ENCODE measurements at regions of chr3 and their contacts with region 1.

Region 1: DNA sequence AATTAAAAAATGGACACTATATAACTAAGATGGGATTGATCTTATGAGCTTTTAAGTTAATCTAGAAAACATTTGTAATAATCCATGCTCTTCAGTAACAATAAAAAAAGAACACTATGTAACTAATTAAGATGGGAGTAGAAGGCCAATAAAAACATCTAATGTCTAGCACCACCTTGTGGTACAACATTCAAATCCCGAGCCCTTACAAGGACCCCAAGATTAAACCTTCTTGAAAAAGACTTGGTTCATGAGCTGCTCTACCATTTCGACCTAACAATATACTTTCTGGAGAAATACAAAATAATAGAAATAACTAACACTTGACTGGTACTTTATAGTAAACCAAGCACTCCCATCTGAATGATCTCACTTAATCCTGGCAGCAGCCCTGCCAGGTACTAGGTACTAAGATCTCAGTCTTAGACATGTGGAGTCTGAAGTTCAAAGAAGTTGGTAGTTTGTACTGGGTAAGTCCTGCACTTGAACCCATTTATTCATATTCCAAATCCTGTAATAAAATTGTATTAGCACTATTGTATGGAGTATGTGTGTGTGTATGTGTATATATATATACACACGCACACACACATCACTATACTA is 21.8 kb downstream of the METTL6 start:
- DNase-seq: peak in 2 of 5 donors; percentile 45 to 47
- H3K4me3 ChIP-seq: no peak overlapping the region
- H3K4me3 Mint-ChIP-seq: no peak overlapping the region
- H3K27ac ChIP-seq: no peak overlapping the region
- H3K27ac Mint-ChIP-seq: peak overlapping the region in 3 of 8 donors; percentile 11 to 61 (median 29)
- H3K4me1 ChIP-seq: no peaks in the 10 kb centered on the region
- H3K4me1 Mint-ChIP-seq: peaks cover 7 to 18% (median 9%) of the 10 kb centered on the region in 3 donors
- H3K27me3 ChIP-seq: no peaks in the 10 kb centered on the region
- H3K27me3 Mint-ChIP-seq: no peaks in the 10 kb centered on the region

Region 2: GRCh38 chr3:15199493-15200105 is 205.9 kb before region 1 on chr3:
- CTCF ChIA-PET with region 1: interaction called, 52 read pairs
- POLR2A ChIA-PET with region 1: interaction called, 3 read pairs
- DNase-seq: no peak
- H3K4me3 ChIP-seq: no peak overlapping the region
- H3K4me3 Mint-ChIP-seq: no peak overlapping the region
- H3K27ac ChIP-seq: no peak overlapping the region
- H3K27ac Mint-ChIP-seq: no peak overlapping the region
- H3K4me1 ChIP-seq: no peaks in the 10 kb centered on the region
- H3K4me1 Mint-ChIP-seq: peaks cover 2 to 10% (median 7%) of the 10 kb centered on the region in 3 donors
- H3K27me3 ChIP-seq: no peaks in the 10 kb centered on the region
- H3K27me3 Mint-ChIP-seq: peaks cover 0 to 2% of the 10 kb centered on the region in 2 donors

Region 3: GRCh38 chr3:15805756-15806266 is 400.3 kb after region 1 on chr3:
- CTCF ChIA-PET with region 1: no interaction called
- POLR2A ChIA-PET with region 1: no interaction called
- DNase-seq: no peak
- H3K4me3 ChIP-seq: no peak overlapping the region
- H3K4me3 Mint-ChIP-seq: no peak overlapping the region
- H3K27ac ChIP-seq: no peak overlapping the region
- H3K27ac Mint-ChIP-seq: peak overlapping the region in 5 of 8 donors; percentile 9 to 62 (median 25)
- H3K4me1 ChIP-seq: peaks cover 18% of the 10 kb centered on the region
- H3K4me1 Mint-ChIP-seq: peaks cover 51 to 84% (median 79%) of the 10 kb centered on the region in 3 donors
- H3K27me3 ChIP-seq: no peaks in the 10 kb centered on the region
- H3K27me3 Mint-ChIP-seq: no peaks in the 10 kb centered on the region